Caco-2 (cell line): ENCODE measurements at regions of chr1 and their contacts with region 1.

Region 1: DNA sequence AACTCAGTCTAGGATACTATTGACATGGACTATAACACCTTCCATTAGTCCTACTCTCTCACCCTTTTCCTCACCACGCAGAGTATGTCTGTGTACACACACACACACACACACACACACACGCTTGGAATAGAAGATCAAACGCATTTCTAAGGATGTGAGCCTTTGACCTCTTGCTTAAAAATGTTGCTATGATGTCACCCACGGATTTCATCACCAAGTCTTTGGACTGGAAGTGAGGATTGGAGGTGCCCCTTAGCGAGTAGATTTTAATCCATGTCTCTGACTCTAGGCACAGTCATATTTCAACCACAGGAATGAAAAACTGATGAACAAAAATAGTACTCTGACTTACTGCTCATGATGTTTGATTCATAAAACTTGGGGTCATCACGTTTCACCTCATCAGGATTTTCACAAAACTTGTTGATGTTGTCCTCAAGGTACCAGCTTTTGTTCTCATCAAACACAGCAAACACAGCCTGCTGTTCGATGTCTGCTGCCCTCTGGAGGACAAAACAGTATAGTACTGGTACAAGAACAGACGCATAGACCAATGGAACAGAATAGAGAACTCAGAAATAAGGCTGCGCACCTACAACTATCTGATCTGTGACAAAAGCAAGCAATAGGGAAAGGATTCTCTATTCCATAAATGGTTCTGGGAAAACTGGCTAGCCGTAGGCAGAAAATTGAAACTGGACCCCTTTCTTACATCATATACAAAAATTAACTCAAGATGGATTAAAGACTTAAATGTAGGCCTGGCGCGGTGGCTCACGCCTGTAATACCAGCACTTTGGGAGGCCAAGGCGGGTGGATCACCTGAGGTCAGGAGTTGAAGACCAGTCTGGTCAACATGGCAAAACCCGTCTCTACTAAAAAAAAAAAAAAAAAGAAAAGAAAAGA is 39.9 kb downstream of the F5 start:
- DNase-seq: peak; percentile 72 to 80
- H3K4me3 ChIP-seq: no peak overlapping the region
- H3K4me3 Mint-ChIP-seq: no peak overlapping the region
- H3K27ac Mint-ChIP-seq: no peak overlapping the region
- H3K4me1 ChIP-seq: peaks cover 27% of the 10 kb centered on the region
- H3K4me1 Mint-ChIP-seq: peaks cover 26% of the 10 kb centered on the region
- H3K27me3 ChIP-seq: no peaks in the 10 kb centered on the region
- H3K27me3 Mint-ChIP-seq: no peaks in the 10 kb centered on the region
- CTCF ChIP-seq: peak; percentile 80 to 82

Region 2: GRCh38 chr1:169367486-169368405 is 178.6 kb before region 1 on chr1 and contains the starts of genes BLZF1 and NME7:
- CTCF ChIA-PET with region 1: no interaction called
- POLR2A ChIA-PET with region 1: no interaction called
- intact Hi-C with region 1: loop called (anchors 5 kb)
- DNase-seq: peak; percentile 96
- H3K4me3 ChIP-seq: peak within 1 kb of the TSS; percentile 72
- H3K4me3 Mint-ChIP-seq: no peak within 1 kb of the TSS
- H3K27ac Mint-ChIP-seq: no peak within 1 kb of the TSS
- H3K4me1 ChIP-seq: no peaks in the 10 kb centered on the region
- H3K4me1 Mint-ChIP-seq: no peaks in the 10 kb centered on the region
- H3K27me3 ChIP-seq: no peaks in the 10 kb centered on the region
- H3K27me3 Mint-ChIP-seq: no peaks in the 10 kb centered on the region
- CTCF ChIP-seq: no peak
- total RNA-seq, gene BLZF1: 20.5 and 23.5 TPM in 2 replicates
- total RNA-seq, gene NME7: 9.0 and 12.7 TPM in 2 replicates

Region 3: DNA sequence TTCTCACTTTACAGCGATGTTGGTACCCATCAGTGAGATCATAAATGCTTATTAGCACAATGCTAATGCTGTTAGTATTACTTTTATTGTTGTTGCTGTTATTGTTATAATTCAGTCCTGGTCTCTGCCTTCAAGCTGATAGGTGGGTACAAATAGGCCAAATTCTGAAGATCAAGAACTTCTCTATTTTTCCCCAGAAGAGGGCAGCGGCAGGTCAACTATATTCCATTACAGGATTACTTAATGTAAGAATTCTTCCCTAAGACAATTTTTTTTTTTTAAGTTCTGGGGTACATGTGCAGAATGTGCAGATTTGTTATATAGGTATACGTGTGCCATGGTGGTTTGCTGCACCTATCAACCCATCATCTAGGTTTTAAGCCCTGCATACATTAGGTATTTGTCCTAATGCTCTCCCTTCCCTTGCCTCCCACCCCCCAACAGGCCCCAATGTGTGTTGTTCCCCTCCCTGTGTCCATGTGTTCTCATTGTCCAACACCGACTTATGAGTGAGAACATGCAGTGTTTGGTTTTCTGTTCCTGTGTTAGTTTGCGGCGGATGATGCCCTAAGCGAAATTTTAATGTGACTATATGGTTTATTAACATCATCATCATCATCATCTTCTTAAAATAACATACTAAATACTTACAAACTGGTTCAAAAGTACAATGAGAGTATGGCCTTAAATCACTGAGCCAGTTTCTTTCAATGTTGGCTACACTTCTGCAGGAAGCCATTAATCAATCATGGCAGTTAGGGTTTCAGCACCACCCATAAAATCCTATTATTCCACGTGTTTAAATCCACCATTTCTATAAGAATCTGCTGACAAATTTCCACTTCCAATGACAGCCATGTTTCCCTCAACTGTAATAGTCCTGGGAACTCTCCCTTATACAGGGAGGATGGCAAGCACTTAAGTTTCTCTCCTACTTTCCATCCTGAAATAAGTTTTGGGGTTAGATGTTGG is 79.8 kb before region 1 on chr1:
- CTCF ChIA-PET with region 1: interaction called, 19 read pairs
- POLR2A ChIA-PET with region 1: no interaction called
- intact Hi-C with region 1: loop called (anchors 1 kb)
- DNase-seq: peak in 1 of 2 experiments; percentile 56
- H3K4me3 ChIP-seq: no peak overlapping the region
- H3K4me3 Mint-ChIP-seq: no peak overlapping the region
- H3K27ac Mint-ChIP-seq: no peak overlapping the region
- H3K4me1 ChIP-seq: no peaks in the 10 kb centered on the region
- H3K4me1 Mint-ChIP-seq: no peaks in the 10 kb centered on the region
- H3K27me3 ChIP-seq: no peaks in the 10 kb centered on the region
- H3K27me3 Mint-ChIP-seq: no peaks in the 10 kb centered on the region
- CTCF ChIP-seq: peak; percentile 24 to 60

Region 4: DNA sequence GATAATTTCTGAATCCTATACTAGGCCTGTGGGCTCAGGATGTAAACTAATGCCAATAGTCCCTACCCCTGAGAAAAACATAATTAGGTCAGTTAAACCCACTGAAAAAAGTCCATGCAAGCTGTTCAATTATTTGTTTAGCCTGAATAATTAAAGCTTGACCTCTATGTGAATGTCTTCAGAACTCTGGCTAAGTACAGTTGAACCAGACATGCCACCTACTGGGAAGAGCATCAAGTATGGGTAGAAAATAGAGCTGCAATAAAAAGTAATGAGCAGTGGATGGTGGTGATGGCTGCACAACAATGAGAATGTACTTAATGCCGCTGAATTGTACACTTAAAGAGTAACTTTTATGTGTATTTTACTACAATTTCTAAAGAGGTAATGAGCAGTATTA is 37.0 kb before region 1 on chr1:
- CTCF ChIA-PET with region 1: interaction called, 5 read pairs
- POLR2A ChIA-PET with region 1: no interaction called
- intact Hi-C with region 1: loop called (anchors 2 kb)
- DNase-seq: peak in 1 of 2 experiments; percentile 30
- H3K4me3 ChIP-seq: no peak overlapping the region
- H3K4me3 Mint-ChIP-seq: no peak overlapping the region
- H3K27ac Mint-ChIP-seq: peak overlapping the region; percentile 46
- H3K4me1 ChIP-seq: peaks cover 50% of the 10 kb centered on the region
- H3K4me1 Mint-ChIP-seq: peaks cover 39% of the 10 kb centered on the region
- H3K27me3 ChIP-seq: no peaks in the 10 kb centered on the region
- H3K27me3 Mint-ChIP-seq: no peaks in the 10 kb centered on the region
- CTCF ChIP-seq: peak in 1 of 2 experiments; percentile 22

Region 5: DNA sequence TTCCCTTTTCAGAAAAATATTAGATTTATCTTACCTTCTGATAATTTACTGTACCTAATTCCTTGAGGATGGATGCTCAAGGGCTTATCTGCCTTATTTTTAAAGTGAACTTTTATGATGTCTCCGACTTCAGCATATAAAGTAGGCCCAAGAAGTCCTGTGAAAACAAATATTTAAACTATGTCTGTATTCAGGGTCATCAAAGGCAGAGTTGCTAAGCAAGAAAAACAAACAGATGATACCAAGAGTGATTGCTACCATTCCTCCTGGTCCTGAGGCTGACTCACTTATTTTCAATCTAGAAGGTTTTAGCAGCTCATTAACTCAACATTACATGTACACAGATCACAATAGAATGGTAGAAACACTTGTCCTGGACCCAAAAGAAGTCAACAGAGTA is 25.8 kb after region 1 on chr1:
- CTCF ChIA-PET with region 1: no interaction called
- POLR2A ChIA-PET with region 1: no interaction called
- intact Hi-C with region 1: loop called (anchors 1 kb)
- DNase-seq: peak; percentile 42 to 75
- H3K4me3 ChIP-seq: no peak overlapping the region
- H3K4me3 Mint-ChIP-seq: peak overlapping the region; percentile 3
- H3K27ac Mint-ChIP-seq: peak overlapping the region; percentile 90
- H3K4me1 ChIP-seq: peaks cover 57% of the 10 kb centered on the region
- H3K4me1 Mint-ChIP-seq: peaks cover 38% of the 10 kb centered on the region
- H3K27me3 ChIP-seq: no peaks in the 10 kb centered on the region
- H3K27me3 Mint-ChIP-seq: no peaks in the 10 kb centered on the region
- CTCF ChIP-seq: no peak

Region 6: GRCh38 chr1:169601093-169601881 is 54.9 kb after region 1 on chr1:
- CTCF ChIA-PET with region 1: no interaction called
- POLR2A ChIA-PET with region 1: no interaction called
- intact Hi-C with region 1: loop called (anchors 1 kb)
- DNase-seq: peak in 1 of 2 experiments; percentile 34
- H3K4me3 ChIP-seq: no peak overlapping the region
- H3K4me3 Mint-ChIP-seq: no peak overlapping the region
- H3K27ac Mint-ChIP-seq: no peak overlapping the region
- H3K4me1 ChIP-seq: no peaks in the 10 kb centered on the region
- H3K4me1 Mint-ChIP-seq: no peaks in the 10 kb centered on the region
- H3K27me3 ChIP-seq: no peaks in the 10 kb centered on the region; the same call in 1 of the 2 replicates
- H3K27me3 Mint-ChIP-seq: peaks cover 6% of the 10 kb centered on the region
- CTCF ChIP-seq: peak; percentile 35 to 41

Region 7: GRCh38 chr1:169809370-169810095 is 263.2 kb after region 1 on chr1:
- CTCF ChIA-PET with region 1: no interaction called
- POLR2A ChIA-PET with region 1: no interaction called
- intact Hi-C with region 1: loop called (anchors 1 kb)
- DNase-seq: peak in 1 of 2 experiments; percentile 51
- H3K4me3 ChIP-seq: no peak overlapping the region
- H3K4me3 Mint-ChIP-seq: no peak overlapping the region
- H3K27ac Mint-ChIP-seq: no peak overlapping the region
- H3K4me1 ChIP-seq: no peaks in the 10 kb centered on the region
- H3K4me1 Mint-ChIP-seq: no peaks in the 10 kb centered on the region
- H3K27me3 ChIP-seq: no peaks in the 10 kb centered on the region
- H3K27me3 Mint-ChIP-seq: no peaks in the 10 kb centered on the region
- CTCF ChIP-seq: peak; percentile 34 to 46